Gastrocnemius medialis (tissue), 4 donors: ENCODE measurements at regions of chrX and their contacts with region 1.

Region 1: GRCh38 chrX:50100188-50100587 is 100.6 kb downstream of the AKAP4 start:
- DNase-seq: no peak
- ATAC-seq: no peak
- H3K4me3 ChIP-seq: no peak overlapping the region
- H3K27ac ChIP-seq: no peak overlapping the region
- H3K4me1 ChIP-seq: no peaks in the 10 kb centered on the region
- H3K27me3 ChIP-seq: no peaks in the 10 kb centered on the region
- CTCF ChIP-seq: peak in 3 of 5 experiments; percentile 9 to 30 (median 16)
- POLR2A ChIP-seq: no peak

Region 2: GRCh38 chrX:49995021-49995731 is 105.0 kb before region 1 on chrX:
- in situ Hi-C with region 1: no loop called
- intact Hi-C with region 1: no loop called
- DNase-seq: no peak
- ATAC-seq: no peak
- H3K4me3 ChIP-seq: no peak overlapping the region
- H3K27ac ChIP-seq: peak overlapping the region in 3 of 4 donors; percentile 23 to 27 (median 26)
- H3K4me1 ChIP-seq: peaks cover 4 to 10% of the 10 kb centered on the region in 2 donors
- H3K27me3 ChIP-seq: no peaks in the 10 kb centered on the region
- CTCF ChIP-seq: no peak
- POLR2A ChIP-seq: no peak

Region 3: GRCh38 chrX:50579955-50580354 is 479.8 kb after region 1 on chrX:
- in situ Hi-C with region 1: no loop called
- intact Hi-C with region 1: loop called (anchors 5 kb)
- DNase-seq: no peak
- ATAC-seq: no peak
- H3K4me3 ChIP-seq: no peak overlapping the region
- H3K27ac ChIP-seq: no peak overlapping the region
- H3K4me1 ChIP-seq: no peaks in the 10 kb centered on the region
- H3K27me3 ChIP-seq: no peaks in the 10 kb centered on the region
- CTCF ChIP-seq: peak in 3 of 5 experiments; percentile 26 to 54 (median 30)
- POLR2A ChIP-seq: no peak